A549 (cell line): ENCODE measurements at regions of chr19 and their contacts with region 1.

Region 1: GRCh38 chr19:34220472-34221063 is 33.8 kb upstream of the GARRE1 start:
- DNase-seq: peak; percentile 87 to 88
- ATAC-seq: peak; percentile 83 to 84
- H3K4me3 ChIP-seq: no peak overlapping the region
- H3K27ac ChIP-seq: no peak overlapping the region
- H3K4me1 ChIP-seq: peaks cover 27% of the 10 kb centered on the region
- CTCF ChIP-seq: peak; percentile 99
- EP300 ChIP-seq: no peak
- POLR2A ChIP-seq: no peak
- RAD21 ChIP-seq: peak; percentile 74 to 85

Region 2: DNA sequence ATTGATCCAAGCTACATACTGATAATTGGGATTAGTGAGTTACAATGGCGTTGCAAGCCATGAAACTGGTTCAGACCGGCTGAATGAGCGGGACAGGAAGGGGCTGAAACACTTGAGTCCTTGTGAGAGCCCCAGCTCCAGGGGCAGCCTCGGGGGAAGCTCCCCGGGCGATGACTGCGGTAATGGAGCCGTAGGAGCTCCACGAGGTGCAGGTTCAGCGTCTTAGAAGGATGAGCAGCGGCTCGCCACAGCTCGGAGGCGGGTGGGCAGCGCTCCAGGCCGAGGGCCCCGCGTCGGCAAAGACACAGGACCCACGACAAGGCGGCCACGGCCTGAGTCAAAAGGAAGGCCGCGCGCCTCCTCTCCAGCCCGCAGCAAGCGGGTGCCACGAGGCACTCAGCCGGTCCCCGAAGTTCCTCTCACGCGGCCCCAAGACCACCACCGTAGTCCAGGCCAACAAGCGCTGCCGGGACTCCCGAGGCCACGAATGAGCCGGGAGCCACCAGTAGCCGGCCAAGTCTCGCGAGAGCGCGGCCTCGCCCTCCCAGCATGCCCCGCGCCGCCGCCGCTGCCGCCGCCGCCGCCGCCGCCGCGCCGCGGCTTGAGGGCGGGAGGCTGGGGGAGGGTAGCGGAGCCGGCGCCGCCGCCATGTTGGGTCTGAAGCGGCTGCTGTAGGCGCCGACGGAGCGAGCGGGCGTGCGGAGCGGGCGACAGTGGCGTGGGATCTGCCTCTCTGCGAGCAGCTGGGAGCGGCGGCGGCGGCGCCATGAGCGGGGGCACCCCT is 48.5 kb before region 1 on chr19 and contains the start of gene LSM14A:
- CTCF ChIA-PET with region 1: interaction called, 10 read pairs
- POLR2A ChIA-PET with region 1: interaction called, 8 read pairs
- DNase-seq: peak; percentile 97 to 98
- ATAC-seq: peak; percentile 86 to 87
- H3K4me3 ChIP-seq: peak within 1 kb of the TSS; percentile 67
- H3K27ac ChIP-seq: peak within 1 kb of the TSS; percentile 94 to 95
- H3K4me1 ChIP-seq: peaks cover 38% of the 10 kb centered on the region
- CTCF ChIP-seq: no peak
- EP300 ChIP-seq: no peak
- POLR2A ChIP-seq: peak; percentile 98
- RAD21 ChIP-seq: no peak
- polyA plus RNA-seq, gene LSM14A: 264 and 278 TPM in 2 replicates

Region 3: DNA sequence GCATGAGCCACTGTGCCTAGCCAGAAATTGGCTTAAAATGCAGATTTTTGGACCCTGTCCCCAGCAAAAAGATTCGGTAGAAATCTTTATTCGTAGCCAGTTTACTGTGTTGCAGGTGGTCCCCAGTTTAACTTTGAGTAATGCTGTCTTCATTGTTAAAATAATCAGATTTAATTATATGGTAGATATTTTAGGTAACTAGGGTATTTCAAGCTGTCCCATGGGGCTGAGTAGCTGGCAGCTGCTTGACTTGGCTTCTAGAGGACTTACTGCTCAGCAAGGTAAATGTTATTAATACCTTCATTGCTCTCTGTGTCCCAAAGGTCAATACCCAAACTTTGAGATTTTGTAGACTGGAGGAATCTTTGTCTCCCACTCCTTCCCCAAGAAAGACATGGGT is 27.1 kb before region 1 on chr19:
- CTCF ChIA-PET with region 1: interaction called, 12 read pairs
- POLR2A ChIA-PET with region 1: no interaction called
- DNase-seq: no peak
- ATAC-seq: no peak
- H3K4me3 ChIP-seq: no peak overlapping the region
- H3K27ac ChIP-seq: no peak overlapping the region
- H3K4me1 ChIP-seq: peaks cover 40% of the 10 kb centered on the region; the same call in 2 of the 3 replicates
- CTCF ChIP-seq: no peak
- EP300 ChIP-seq: no peak
- POLR2A ChIP-seq: no peak
- RAD21 ChIP-seq: no peak

Region 4: GRCh38 chr19:34209726-34210125 is 10.8 kb before region 1 on chr19:
- CTCF ChIA-PET with region 1: interaction called, 47 read pairs
- POLR2A ChIA-PET with region 1: no interaction called
- DNase-seq: no peak
- ATAC-seq: no peak
- H3K4me3 ChIP-seq: no peak overlapping the region
- H3K27ac ChIP-seq: no peak overlapping the region
- H3K4me1 ChIP-seq: no peaks in the 10 kb centered on the region
- CTCF ChIP-seq: no peak
- EP300 ChIP-seq: no peak
- POLR2A ChIP-seq: no peak
- RAD21 ChIP-seq: no peak

Region 5: GRCh38 chr19:34232566-34233481 is 12.3 kb after region 1 on chr19:
- CTCF ChIA-PET with region 1: interaction called, 173 read pairs
- POLR2A ChIA-PET with region 1: interaction called, 3 read pairs
- DNase-seq: peak; percentile 62
- ATAC-seq: peak; percentile 81 to 91
- H3K4me3 ChIP-seq: no peak overlapping the region
- H3K27ac ChIP-seq: peak overlapping the region; percentile 53 to 68
- H3K4me1 ChIP-seq: peaks cover 22% of the 10 kb centered on the region
- CTCF ChIP-seq: no peak
- EP300 ChIP-seq: no peak
- POLR2A ChIP-seq: no peak
- RAD21 ChIP-seq: no peak